HCT116 (cell line): ENCODE measurements at regions of chr14 and their contacts with region 1.

Region 1: DNA sequence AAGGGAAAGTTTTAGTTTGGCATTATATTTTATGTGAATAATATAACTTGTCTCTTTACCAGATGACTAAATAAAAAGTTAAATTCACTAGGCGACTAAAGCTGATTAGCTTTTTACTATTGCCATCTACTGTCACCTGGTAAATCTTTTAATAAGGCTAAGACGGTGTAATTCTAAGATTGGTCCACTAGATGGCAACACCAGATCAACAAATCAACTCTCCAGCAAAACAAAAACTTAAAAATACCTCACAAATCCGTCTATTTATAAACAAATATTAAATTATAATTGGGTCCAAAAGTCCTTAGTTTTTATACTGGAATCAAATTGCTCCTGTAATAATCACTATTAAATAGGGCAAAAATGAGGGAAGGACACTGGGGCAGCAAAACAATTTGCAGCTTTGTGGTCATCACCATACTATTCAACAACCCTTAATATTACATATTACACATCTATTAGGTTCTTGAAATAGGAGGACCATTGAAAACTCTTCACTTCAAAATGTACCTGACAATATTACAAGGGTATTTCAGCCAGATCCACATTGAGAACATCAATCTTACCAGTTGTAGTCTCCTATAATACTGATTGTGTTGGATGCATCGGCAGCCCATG is 47.9 kb downstream of the GALC start:
- DNase-seq: peak; percentile 33
- ATAC-seq: peak; percentile 61; the same call in 1 of the 2 replicates
- H3K4me3 ChIP-seq: no peak overlapping the region
- H3K27ac ChIP-seq: no peak overlapping the region
- H3K4me1 ChIP-seq: no peaks in the 10 kb centered on the region
- H3K27me3 ChIP-seq: no peaks in the 10 kb centered on the region
- CTCF ChIP-seq: peak; percentile 33 to 59 (median 50); a peak in 4 of 6 replicates
- POLR2A ChIP-seq: no peak
- RAD21 ChIP-seq: peak; percentile 54

Region 2: GRCh38 chr14:87199381-87199780 is 745.7 kb before region 1 on chr14:
- CTCF ChIA-PET with region 1: no interaction called
- POLR2A ChIA-PET with region 1: no interaction called
- RAD21 ChIA-PET with region 1: no interaction called
- intact Hi-C with region 1: no loop called
- DNase-seq: no peak
- ATAC-seq: no peak
- H3K4me3 ChIP-seq: no peak overlapping the region
- H3K27ac ChIP-seq: no peak overlapping the region
- H3K4me1 ChIP-seq: no peaks in the 10 kb centered on the region
- H3K27me3 ChIP-seq: no peaks in the 10 kb centered on the region
- CTCF ChIP-seq: no peak
- POLR2A ChIP-seq: no peak
- RAD21 ChIP-seq: no peak

Region 3: GRCh38 chr14:88005978-88006851 is 61.1 kb after region 1 on chr14:
- CTCF ChIA-PET with region 1: no interaction called
- POLR2A ChIA-PET with region 1: no interaction called
- RAD21 ChIA-PET with region 1: no interaction called
- intact Hi-C with region 1: no loop called
- DNase-seq: no peak
- ATAC-seq: no peak
- H3K4me3 ChIP-seq: no peak overlapping the region
- H3K27ac ChIP-seq: no peak overlapping the region
- H3K4me1 ChIP-seq: no peaks in the 10 kb centered on the region
- H3K27me3 ChIP-seq: no peaks in the 10 kb centered on the region
- CTCF ChIP-seq: no peak
- POLR2A ChIP-seq: no peak
- RAD21 ChIP-seq: no peak

Region 4: GRCh38 chr14:88168498-88169165 is 223.5 kb after region 1 on chr14:
- CTCF ChIA-PET with region 1: no interaction called
- POLR2A ChIA-PET with region 1: no interaction called
- RAD21 ChIA-PET with region 1: no interaction called
- intact Hi-C with region 1: loop called (anchors 1 kb)
- DNase-seq: no peak
- ATAC-seq: peak; percentile 88
- H3K4me3 ChIP-seq: no peak overlapping the region
- H3K27ac ChIP-seq: no peak overlapping the region
- H3K4me1 ChIP-seq: no peaks in the 10 kb centered on the region
- H3K27me3 ChIP-seq: no peaks in the 10 kb centered on the region
- CTCF ChIP-seq: peak in 2 of 3 experiments; percentile 73 to 74; a peak in 4 of 6 replicates
- POLR2A ChIP-seq: no peak
- RAD21 ChIP-seq: peak; percentile 34

Region 5: GRCh38 chr14:88233915-88234314 is 288.8 kb after region 1 on chr14:
- CTCF ChIA-PET with region 1: no interaction called
- POLR2A ChIA-PET with region 1: no interaction called
- RAD21 ChIA-PET with region 1: no interaction called
- intact Hi-C with region 1: loop called (anchors 2 kb)
- DNase-seq: peak; percentile 24
- ATAC-seq: peak; percentile 88
- H3K4me3 ChIP-seq: no peak overlapping the region
- H3K27ac ChIP-seq: no peak overlapping the region
- H3K4me1 ChIP-seq: no peaks in the 10 kb centered on the region
- H3K27me3 ChIP-seq: peaks cover 16% of the 10 kb centered on the region
- CTCF ChIP-seq: peak in 2 of 3 experiments; percentile 62 to 64; a peak in 4 of 6 replicates
- POLR2A ChIP-seq: no peak
- RAD21 ChIP-seq: peak; percentile 44; the same call in 1 of the 2 replicates

Region 6: DNA sequence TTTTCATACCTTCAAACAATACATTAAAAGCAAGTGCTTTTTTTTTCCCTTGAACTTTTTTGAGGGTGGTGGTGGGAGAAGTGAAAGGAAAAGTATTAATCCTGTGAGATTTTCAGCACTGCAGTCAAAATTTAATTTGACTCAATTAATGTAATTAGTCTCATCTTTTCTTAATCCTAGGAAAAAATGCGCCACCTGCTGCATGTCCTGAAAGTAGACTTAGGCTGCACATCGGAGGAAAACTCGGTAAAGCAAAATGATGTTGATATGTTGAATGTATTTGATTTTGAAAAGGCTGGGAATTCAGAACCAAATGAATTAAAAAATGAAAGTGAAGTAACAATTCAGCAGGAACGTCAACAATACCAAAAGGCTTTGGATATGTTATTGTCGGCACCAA is 492.6 kb after region 1 on chr14:
- CTCF ChIA-PET with region 1: interaction called, 3 read pairs
- POLR2A ChIA-PET with region 1: no interaction called
- RAD21 ChIA-PET with region 1: no interaction called
- intact Hi-C with region 1: loop called (anchors 5 kb)
- DNase-seq: no peak
- ATAC-seq: no peak
- H3K4me3 ChIP-seq: no peak overlapping the region
- H3K27ac ChIP-seq: no peak overlapping the region
- H3K4me1 ChIP-seq: no peaks in the 10 kb centered on the region
- H3K27me3 ChIP-seq: no peaks in the 10 kb centered on the region
- CTCF ChIP-seq: peak; percentile 17 to 56 (median 38); a peak in 3 of 6 replicates
- POLR2A ChIP-seq: no peak
- RAD21 ChIP-seq: peak; percentile 28; the same call in 1 of the 2 replicates

Region 7: GRCh38 chr14:88882236-88882635 is 937.1 kb after region 1 on chr14:
- CTCF ChIA-PET with region 1: no interaction called
- POLR2A ChIA-PET with region 1: no interaction called
- RAD21 ChIA-PET with region 1: no interaction called
- intact Hi-C with region 1: loop called (anchors 10 kb)
- DNase-seq: no peak
- ATAC-seq: no peak
- H3K4me3 ChIP-seq: no peak overlapping the region
- H3K27ac ChIP-seq: no peak overlapping the region
- H3K4me1 ChIP-seq: no peaks in the 10 kb centered on the region
- H3K27me3 ChIP-seq: no peaks in the 10 kb centered on the region
- CTCF ChIP-seq: no peak
- POLR2A ChIP-seq: no peak
- RAD21 ChIP-seq: no peak

Region 8: GRCh38 chr14:89013084-89013504 is 1068.0 kb after region 1 on chr14:
- CTCF ChIA-PET with region 1: no interaction called
- POLR2A ChIA-PET with region 1: no interaction called
- RAD21 ChIA-PET with region 1: no interaction called
- intact Hi-C with region 1: loop called (anchors 10 kb)
- DNase-seq: peak; percentile 50
- ATAC-seq: peak; percentile 90
- H3K4me3 ChIP-seq: no peak overlapping the region
- H3K27ac ChIP-seq: no peak overlapping the region
- H3K4me1 ChIP-seq: no peaks in the 10 kb centered on the region
- H3K27me3 ChIP-seq: no peaks in the 10 kb centered on the region
- CTCF ChIP-seq: peak in 2 of 3 experiments; percentile 42 to 63; a peak in 5 of 6 replicates
- POLR2A ChIP-seq: no peak
- RAD21 ChIP-seq: peak; percentile 71

Region 9: GRCh38 chr14:89899917-89900663 is 1955.0 kb after region 1 on chr14:
- CTCF ChIA-PET with region 1: no interaction called
- POLR2A ChIA-PET with region 1: no interaction called
- RAD21 ChIA-PET with region 1: no interaction called
- intact Hi-C with region 1: loop called (anchors 10 kb)
- DNase-seq: peak; percentile 13
- ATAC-seq: peak; percentile 85
- H3K4me3 ChIP-seq: no peak overlapping the region
- H3K27ac ChIP-seq: no peak overlapping the region
- H3K4me1 ChIP-seq: no peaks in the 10 kb centered on the region
- H3K27me3 ChIP-seq: no peaks in the 10 kb centered on the region
- CTCF ChIP-seq: peak; percentile 40 to 73 (median 56); a peak in 4 of 6 replicates
- POLR2A ChIP-seq: no peak
- RAD21 ChIP-seq: peak; percentile 61